Dendritic cell treated with granulocyte-macrophage colony-stimulating factor and Interleukin-4, amounts not matched to agents 40 ng/mL and 50 ng/mL, for 4 days (primary cell): ENCODE measurements at regions of chr3 and their contacts with region 1.

Region 1: DNA sequence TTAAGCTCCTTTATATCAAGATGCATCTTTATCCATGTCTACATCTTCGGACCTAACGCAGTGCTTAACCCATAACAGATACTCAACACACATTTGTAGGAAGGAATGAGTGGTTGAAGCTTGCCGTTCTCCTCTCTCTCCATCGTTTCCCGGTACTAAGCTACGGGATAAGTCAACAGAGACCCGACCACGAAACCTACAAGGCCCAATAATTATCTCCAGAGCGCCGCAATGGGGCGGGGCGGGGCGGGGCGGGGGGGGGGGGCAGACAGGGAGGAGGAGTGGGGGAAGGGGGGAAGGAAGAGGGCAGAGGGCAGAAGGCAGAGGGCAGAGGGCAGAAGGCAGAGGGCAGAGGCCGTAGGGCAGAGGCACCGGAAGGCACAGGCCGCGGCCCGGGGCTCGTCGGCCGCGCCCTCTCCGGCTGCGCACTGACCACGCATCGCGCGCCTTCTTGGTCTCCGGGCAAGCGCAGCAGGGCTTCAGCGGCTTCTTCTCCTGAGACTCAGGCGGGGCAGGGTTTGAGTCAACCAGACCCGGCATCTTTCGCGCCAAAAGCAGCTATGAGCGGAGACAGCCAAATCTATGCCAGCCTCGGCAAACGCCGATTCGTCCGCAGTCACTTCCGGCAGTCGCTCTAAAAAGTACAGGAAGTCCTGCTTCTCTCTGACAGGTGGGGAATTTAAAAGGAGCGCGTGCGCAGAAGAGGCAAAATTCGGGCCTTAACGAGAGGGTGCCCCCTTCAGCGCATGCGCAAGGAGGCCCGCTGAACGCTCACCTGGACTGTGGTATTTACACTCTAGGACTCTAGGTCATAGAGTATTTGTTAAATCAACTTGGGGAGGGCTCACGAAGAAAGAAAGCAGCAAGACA is at the start of gene COX17:
- H3K4me3 Mint-ChIP-seq: peak within 1 kb of the TSS; percentile 94
- H3K27ac Mint-ChIP-seq: peak within 1 kb of the TSS; percentile 99
- H3K4me1 Mint-ChIP-seq: peaks cover 34% of the 10 kb centered on the region
- H3K27me3 Mint-ChIP-seq: no peaks in the 10 kb centered on the region

Region 2: GRCh38 chr3:119145500-119146191 is 531.4 kb before region 1 on chr3 and contains the start of gene TEX55:
- intact Hi-C with region 1: loop called (anchors 10 kb)
- H3K4me3 Mint-ChIP-seq: no peak within 1 kb of the TSS
- H3K27ac Mint-ChIP-seq: no peak within 1 kb of the TSS
- H3K4me1 Mint-ChIP-seq: no peaks in the 10 kb centered on the region
- H3K27me3 Mint-ChIP-seq: no peaks in the 10 kb centered on the region

Region 3: GRCh38 chr3:119498186-119498987 is 178.6 kb before region 1 on chr3 and contains the start of gene TIMMDC1:
- intact Hi-C with region 1: loop called (anchors 1 kb)
- H3K4me3 Mint-ChIP-seq: peak within 1 kb of the TSS; percentile 99
- H3K27ac Mint-ChIP-seq: peak within 1 kb of the TSS; percentile 99
- H3K4me1 Mint-ChIP-seq: peaks cover 34% of the 10 kb centered on the region
- H3K27me3 Mint-ChIP-seq: no peaks in the 10 kb centered on the region

Region 4: GRCh38 chr3:119588112-119588511 is 88.9 kb before region 1 on chr3:
- intact Hi-C with region 1: loop called (anchors 5 kb)
- H3K4me3 Mint-ChIP-seq: peak overlapping the region; percentile 33
- H3K27ac Mint-ChIP-seq: peak overlapping the region; percentile 90
- H3K4me1 Mint-ChIP-seq: peaks cover 59% of the 10 kb centered on the region
- H3K27me3 Mint-ChIP-seq: peaks cover 2% of the 10 kb centered on the region

Region 5: GRCh38 chr3:119637679-119638525 is 39.1 kb before region 1 on chr3:
- intact Hi-C with region 1: loop called (anchors 5 kb)
- H3K4me3 Mint-ChIP-seq: peak overlapping the region; percentile 64
- H3K27ac Mint-ChIP-seq: peak overlapping the region; percentile 99
- H3K4me1 Mint-ChIP-seq: peaks cover 75% of the 10 kb centered on the region
- H3K27me3 Mint-ChIP-seq: no peaks in the 10 kb centered on the region

Region 6: DNA sequence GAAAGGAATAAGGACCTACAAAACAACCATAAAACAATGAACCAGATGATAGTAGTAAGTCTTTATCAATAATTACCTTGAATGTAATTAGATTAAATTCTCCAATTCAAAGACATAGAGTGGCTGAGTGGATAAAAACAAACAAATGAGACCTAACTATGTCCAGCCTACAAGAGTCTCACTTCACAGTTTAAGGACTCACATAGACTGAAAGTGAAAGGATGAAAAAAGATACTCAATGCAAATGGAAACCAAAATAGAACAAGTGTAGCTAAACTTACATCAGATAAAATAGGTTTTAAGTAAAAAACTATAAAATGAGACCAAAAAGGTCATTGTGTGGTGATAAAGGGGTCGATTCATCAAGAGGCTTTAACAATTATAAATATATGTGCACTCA is 83.0 kb after region 1 on chr3:
- intact Hi-C with region 1: no loop called
- H3K4me3 Mint-ChIP-seq: no peak overlapping the region
- H3K27ac Mint-ChIP-seq: no peak overlapping the region
- H3K4me1 Mint-ChIP-seq: no peaks in the 10 kb centered on the region
- H3K27me3 Mint-ChIP-seq: no peaks in the 10 kb centered on the region